PC-9 (cell line): ENCODE measurements at regions of chr1 and their contacts with region 1.

Region 1: GRCh38 chr1:234610348-234611152 is 572 bp upstream of the IRF2BP2 start:
- DNase-seq: peak; percentile 72 to 93
- H3K4me3 ChIP-seq: peak overlapping the region; percentile 91
- H3K27ac ChIP-seq: peak overlapping the region; percentile 100
- H3K4me1 ChIP-seq: peaks cover 38% of the 10 kb centered on the region
- H3K27me3 ChIP-seq: no peaks in the 10 kb centered on the region
- CTCF ChIP-seq: no peak

Region 2: DNA sequence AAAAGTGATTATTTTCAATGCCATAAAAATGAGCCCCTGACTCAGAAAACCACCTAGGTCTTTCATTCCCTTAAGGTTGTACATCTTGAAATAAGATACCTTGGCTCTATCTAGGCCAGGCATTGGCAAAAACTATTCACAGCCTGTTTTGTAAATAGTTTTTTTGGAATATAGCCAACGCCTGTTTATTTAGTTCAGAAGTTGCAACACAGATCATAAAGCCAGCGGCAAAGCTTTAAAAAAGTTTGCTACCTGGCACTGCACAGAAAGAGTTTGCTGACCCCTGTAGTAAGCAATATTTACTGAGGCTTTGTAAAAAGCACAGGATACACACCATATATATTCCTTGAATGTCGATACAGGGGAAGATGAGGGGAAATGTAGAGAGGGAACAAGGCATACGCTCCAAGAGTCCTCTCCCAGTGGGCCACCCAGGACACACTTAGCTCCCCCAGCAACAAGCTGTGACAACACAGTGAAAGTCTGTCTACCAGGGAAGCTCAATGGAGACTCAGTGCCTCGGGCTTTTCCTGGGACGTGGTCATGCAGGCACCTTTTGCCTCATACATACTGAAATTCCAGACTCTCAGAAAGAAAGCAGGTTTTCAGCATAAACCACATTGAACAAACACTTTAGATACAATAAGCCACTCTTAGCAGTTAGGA is 152.1 kb before region 1 on chr1:
- CTCF ChIA-PET with region 1: no interaction called
- POLR2A ChIA-PET with region 1: interaction called, 12 read pairs
- intact Hi-C with region 1: no loop called
- DNase-seq: peak in 1 of 2 experiments; percentile 84
- H3K4me3 ChIP-seq: 0 out of 2 replicates have a peak overlapping the region, but pooled peaks have one; percentile 4
- H3K27ac ChIP-seq: peak overlapping the region; percentile 58
- H3K4me1 ChIP-seq: peaks cover 29% of the 10 kb centered on the region
- H3K27me3 ChIP-seq: no peaks in the 10 kb centered on the region
- CTCF ChIP-seq: no peak

Region 3: DNA sequence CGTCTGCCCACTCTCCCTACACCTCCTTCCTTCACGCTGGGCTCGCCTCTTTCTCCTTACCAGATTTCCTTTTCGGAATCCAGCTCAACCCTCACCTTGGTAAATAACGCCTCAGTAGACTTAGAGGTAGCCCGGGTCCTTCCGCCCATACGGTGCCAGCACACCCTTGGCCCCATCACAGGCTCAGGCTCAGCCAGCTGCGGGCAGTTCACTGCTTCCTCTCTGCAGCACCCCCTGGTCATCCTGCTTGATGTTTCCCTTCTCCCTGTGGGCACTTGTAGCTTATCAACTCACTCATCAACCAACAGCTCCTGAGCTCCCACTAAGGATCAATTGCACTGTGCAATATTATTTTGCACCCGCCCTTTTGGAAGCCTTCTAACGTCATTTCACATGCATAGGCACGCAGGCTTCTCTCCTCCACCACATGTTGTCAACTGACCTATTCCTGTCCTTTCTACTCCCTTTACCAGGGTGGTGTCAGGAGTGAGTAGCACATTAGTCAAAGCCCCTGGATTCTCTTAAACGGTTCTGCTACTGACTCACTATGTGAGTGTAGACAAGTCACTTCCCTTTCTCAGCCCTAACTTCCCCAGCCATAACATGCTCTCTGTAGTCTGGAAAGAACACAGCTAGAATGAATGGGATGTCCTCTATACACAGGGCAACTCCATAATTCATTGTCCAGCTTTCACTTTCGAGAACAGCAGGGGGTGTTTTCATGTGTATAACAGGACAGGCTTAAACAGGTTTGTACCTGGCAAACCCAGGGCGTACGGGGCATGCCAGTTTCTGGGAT is 46.5 kb after region 1 on chr1:
- CTCF ChIA-PET with region 1: interaction called, 14 read pairs
- POLR2A ChIA-PET with region 1: interaction called, 57 read pairs
- intact Hi-C with region 1: loop called (anchors 1 kb)
- DNase-seq: peak; percentile 50 to 95
- H3K4me3 ChIP-seq: peak overlapping the region; percentile 69
- H3K27ac ChIP-seq: peak overlapping the region; percentile 99
- H3K4me1 ChIP-seq: peaks cover 59% of the 10 kb centered on the region
- H3K27me3 ChIP-seq: no peaks in the 10 kb centered on the region
- CTCF ChIP-seq: no peak

Region 4: GRCh38 chr1:234691567-234691966 is 81.0 kb after region 1 on chr1:
- CTCF ChIA-PET with region 1: no interaction called
- POLR2A ChIA-PET with region 1: no interaction called
- intact Hi-C with region 1: no loop called
- DNase-seq: no peak
- H3K4me3 ChIP-seq: no peak overlapping the region
- H3K27ac ChIP-seq: no peak overlapping the region
- H3K4me1 ChIP-seq: no peaks in the 10 kb centered on the region
- H3K27me3 ChIP-seq: no peaks in the 10 kb centered on the region
- CTCF ChIP-seq: peak; percentile 46

Region 5: DNA sequence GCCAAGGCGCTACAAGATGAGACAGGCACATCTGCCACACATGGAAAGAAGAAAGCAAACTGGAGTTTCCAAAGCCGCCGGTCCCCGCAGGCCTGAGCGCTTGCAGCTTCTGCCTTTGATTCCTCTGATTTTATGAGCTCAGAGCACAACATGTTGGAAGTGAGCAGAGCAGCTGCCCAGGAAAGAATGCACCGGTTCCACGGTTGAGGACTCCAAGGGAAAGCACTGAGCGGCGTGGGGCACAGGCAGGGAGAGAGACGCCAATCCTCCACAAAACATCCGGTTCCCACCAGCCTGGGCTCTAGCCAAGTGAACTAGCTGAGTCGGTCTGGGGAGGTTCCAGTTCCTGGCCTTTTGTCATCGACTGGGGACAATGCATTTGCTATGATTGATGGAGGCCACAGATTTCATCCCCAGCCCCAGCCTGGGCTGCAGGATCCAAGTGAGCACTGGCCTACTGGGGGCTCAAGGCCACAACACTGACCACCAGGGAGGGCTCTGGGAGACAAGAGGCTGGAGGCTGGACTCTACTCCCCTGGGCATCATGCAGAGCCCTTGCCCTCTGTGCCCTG is 252.5 kb after region 1 on chr1:
- CTCF ChIA-PET with region 1: no interaction called
- POLR2A ChIA-PET with region 1: interaction called, 22 read pairs
- intact Hi-C with region 1: no loop called
- DNase-seq: no peak
- H3K4me3 ChIP-seq: no peak overlapping the region
- H3K27ac ChIP-seq: no peak overlapping the region
- H3K4me1 ChIP-seq: peaks cover 56% of the 10 kb centered on the region
- H3K27me3 ChIP-seq: no peaks in the 10 kb centered on the region
- CTCF ChIP-seq: no peak

Region 6: DNA sequence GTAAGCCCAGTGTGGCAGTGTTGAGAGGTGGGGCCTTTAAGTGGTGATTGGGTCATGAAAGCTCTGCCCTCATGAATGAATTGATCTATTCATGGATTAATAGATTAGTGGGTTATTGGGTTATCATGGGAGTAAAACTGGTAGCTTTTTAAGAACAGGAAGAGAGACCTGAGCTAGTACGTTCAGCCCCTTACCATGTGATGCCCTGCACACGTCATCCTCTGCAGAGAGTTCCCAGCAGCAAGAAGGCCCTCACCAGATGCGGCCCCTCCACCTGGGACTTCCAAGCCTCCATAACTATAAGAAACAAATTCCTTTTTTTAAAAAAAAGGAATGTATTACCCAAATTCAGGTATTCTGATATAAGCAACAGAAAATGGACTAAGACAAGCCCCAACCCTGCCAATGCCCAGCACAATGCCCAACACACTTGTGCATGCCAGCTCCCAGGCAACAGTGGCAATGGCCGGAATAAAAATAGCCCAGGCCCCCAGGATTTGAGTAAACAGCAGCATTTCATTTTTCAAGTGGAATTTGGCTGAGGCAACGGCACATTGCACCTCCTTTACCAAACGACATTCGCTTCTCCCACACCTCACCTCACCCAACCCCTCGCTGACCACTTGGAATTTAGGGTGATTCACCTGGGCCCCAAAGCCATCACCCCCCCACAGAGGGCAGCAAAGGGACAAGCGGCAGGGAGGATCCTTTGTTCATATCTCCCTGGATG is 302.2 kb after region 1 on chr1:
- CTCF ChIA-PET with region 1: no interaction called
- POLR2A ChIA-PET with region 1: no interaction called
- intact Hi-C with region 1: loop called (anchors 5 kb)
- DNase-seq: peak in 1 of 2 experiments; percentile 89
- H3K4me3 ChIP-seq: no peak overlapping the region
- H3K27ac ChIP-seq: no peak overlapping the region
- H3K4me1 ChIP-seq: no peaks in the 10 kb centered on the region
- H3K27me3 ChIP-seq: no peaks in the 10 kb centered on the region
- CTCF ChIP-seq: no peak

Region 7: GRCh38 chr1:234978397-234979295 is 368.1 kb after region 1 on chr1:
- CTCF ChIA-PET with region 1: no interaction called
- POLR2A ChIA-PET with region 1: interaction called, 6 read pairs
- intact Hi-C with region 1: loop called (anchors 2 kb)
- DNase-seq: peak; percentile 45 to 93
- H3K4me3 ChIP-seq: peak overlapping the region; percentile 30; the same call in 1 of the 2 replicates
- H3K27ac ChIP-seq: peak overlapping the region; percentile 99
- H3K4me1 ChIP-seq: peaks cover 99% of the 10 kb centered on the region
- H3K27me3 ChIP-seq: no peaks in the 10 kb centered on the region
- CTCF ChIP-seq: no peak